CD4-positive, alpha-beta memory T cell (primary cell): ENCODE measurements at regions of chr12 and their contacts with region 1.

Region 1: DNA sequence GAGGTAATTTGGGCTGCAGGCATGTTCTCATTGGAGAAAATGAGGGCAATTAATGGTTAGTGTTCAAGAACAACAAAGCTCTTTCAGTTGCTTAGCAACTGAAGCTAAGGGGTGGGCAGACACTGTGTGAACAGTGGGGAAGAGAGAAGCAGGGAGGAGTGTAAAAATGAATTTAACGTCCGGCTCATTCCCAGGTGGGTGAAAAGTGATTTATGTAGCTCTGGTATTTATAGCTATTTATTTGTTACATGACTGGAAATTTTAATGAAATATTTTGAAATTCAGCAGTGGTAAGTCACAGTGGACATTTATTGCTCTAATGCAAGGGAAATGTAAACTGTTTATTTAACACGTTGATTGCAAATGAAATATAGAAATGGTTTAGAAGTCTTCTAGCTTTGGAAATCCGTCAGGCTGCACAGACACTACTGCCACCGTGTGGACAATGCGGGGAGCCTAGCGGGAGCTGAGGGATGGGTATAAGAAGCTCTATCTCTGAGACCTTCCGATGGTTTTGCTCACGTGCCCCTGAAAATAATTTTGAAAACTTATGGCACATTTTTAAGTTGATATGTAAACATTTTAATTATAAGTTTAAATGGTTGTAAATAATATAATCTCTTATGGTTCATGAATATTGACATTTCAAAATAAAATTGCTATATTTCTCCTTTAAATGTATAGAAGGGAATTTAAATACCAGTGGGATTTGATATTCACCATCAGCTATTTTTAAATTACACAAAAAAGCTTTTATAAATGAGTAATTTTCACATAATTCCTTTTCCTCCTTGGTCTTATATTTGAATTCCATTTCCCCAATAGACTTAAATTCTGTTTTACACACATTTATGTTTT is 54.4 kb downstream of the E2F7 start:
- DNase-seq: peak; percentile 35 to 53 (median 43)
- H3K4me3 ChIP-seq: no peak overlapping the region
- H3K4me3 Mint-ChIP-seq: peak overlapping the region in 1 of 8 donors; percentile 5
- H3K27ac ChIP-seq: no peak overlapping the region
- H3K27ac Mint-ChIP-seq: no peak overlapping the region
- H3K4me1 ChIP-seq: no peaks in the 10 kb centered on the region
- H3K4me1 Mint-ChIP-seq: peaks cover 5 to 7% (median 5%) of the 10 kb centered on the region in 4 donors
- H3K27me3 ChIP-seq: no peaks in the 10 kb centered on the region
- H3K27me3 Mint-ChIP-seq: peaks cover 16 to 17% of the 10 kb centered on the region in 2 donors

Region 2: DNA sequence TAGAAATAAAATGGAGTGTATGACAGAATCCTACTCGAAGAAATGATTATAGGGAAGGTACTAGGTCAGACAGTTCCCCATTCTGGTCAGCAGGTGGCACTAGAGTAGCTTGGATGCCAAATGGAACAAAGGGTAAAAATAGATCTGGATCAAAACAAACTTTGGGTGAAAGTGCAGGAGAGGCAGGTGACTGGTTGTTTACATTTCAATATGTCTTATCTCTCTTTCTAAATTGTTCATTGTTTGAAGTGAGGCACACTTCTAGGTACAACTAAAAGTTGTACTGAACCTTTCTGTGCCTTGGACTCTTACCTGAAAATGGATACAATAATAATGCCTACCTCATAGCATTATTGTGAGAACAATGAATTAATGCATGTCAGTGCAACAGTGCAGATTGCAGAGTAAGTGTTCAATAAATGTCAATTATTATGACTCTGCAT is 389.3 kb before region 1 on chr12:
- CTCF ChIA-PET with region 1: interaction called, 53 read pairs
- POLR2A ChIA-PET with region 1: no interaction called
- intact Hi-C with region 1: no loop called
- DNase-seq: peak; percentile 63 to 71 (median 63)
- H3K4me3 ChIP-seq: no peak overlapping the region
- H3K4me3 Mint-ChIP-seq: no peak overlapping the region
- H3K27ac ChIP-seq: no peak overlapping the region
- H3K27ac Mint-ChIP-seq: no peak overlapping the region
- H3K4me1 ChIP-seq: no peaks in the 10 kb centered on the region
- H3K4me1 Mint-ChIP-seq: peaks cover 0 to 4% (median 3%) of the 10 kb centered on the region in 4 donors
- H3K27me3 ChIP-seq: no peaks in the 10 kb centered on the region
- H3K27me3 Mint-ChIP-seq: no peaks in the 10 kb centered on the region

Region 3: DNA sequence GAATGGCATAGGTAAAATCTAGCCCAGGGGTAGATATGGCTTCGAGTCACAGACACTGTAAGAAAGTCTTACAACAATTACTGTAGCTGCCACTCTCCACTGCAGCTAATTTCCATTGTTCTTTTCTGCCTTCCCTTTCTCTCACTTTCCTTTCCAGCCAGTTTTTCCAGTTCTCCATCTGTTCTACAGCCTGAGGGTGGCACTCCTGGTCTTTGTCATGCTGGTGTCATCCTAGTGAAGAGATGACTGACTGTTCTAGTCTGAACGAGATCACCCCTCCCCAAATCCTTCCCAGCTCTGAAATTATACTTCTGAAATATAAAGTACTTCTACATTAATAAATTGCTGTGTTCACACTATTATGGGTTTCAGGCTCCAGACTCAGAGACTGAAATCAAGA is 57.9 kb before region 1 on chr12:
- CTCF ChIA-PET with region 1: no interaction called
- POLR2A ChIA-PET with region 1: no interaction called
- intact Hi-C with region 1: no loop called
- DNase-seq: no peak
- H3K4me3 ChIP-seq: no peak overlapping the region
- H3K4me3 Mint-ChIP-seq: no peak overlapping the region
- H3K27ac ChIP-seq: no peak overlapping the region
- H3K27ac Mint-ChIP-seq: no peak overlapping the region
- H3K4me1 ChIP-seq: no peaks in the 10 kb centered on the region
- H3K4me1 Mint-ChIP-seq: peaks cover 0 to 4% (median 0%) of the 10 kb centered on the region in 4 donors
- H3K27me3 ChIP-seq: no peaks in the 10 kb centered on the region
- H3K27me3 Mint-ChIP-seq: peaks cover 11 to 20% of the 10 kb centered on the region in 2 donors

Region 4: DNA sequence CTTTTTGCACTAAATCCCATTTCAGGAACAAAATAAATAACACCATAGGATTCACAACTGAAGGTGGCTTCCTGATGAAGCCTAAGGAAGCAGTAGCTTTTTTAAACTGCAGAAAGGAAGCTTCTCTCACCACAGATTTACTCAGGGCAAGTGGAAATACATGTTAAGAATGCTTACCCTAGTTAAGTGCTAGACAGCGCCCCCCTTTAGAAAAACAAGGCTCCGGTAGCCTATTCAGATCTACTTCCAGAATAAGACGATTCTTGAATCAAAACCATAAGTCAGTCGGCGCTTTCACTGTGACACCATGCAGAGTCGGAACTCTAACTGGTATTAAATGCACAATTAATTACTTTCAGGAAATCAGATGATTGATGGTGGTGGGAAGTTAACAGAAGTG is 12.6 kb after region 1 on chr12:
- CTCF ChIA-PET with region 1: interaction called, 89 read pairs
- POLR2A ChIA-PET with region 1: no interaction called
- intact Hi-C with region 1: no loop called
- DNase-seq: no peak
- H3K4me3 ChIP-seq: no peak overlapping the region
- H3K4me3 Mint-ChIP-seq: no peak overlapping the region
- H3K27ac ChIP-seq: no peak overlapping the region
- H3K27ac Mint-ChIP-seq: no peak overlapping the region
- H3K4me1 ChIP-seq: no peaks in the 10 kb centered on the region
- H3K4me1 Mint-ChIP-seq: peaks cover 0 to 1% (median 0%) of the 10 kb centered on the region in 4 donors
- H3K27me3 ChIP-seq: no peaks in the 10 kb centered on the region
- H3K27me3 Mint-ChIP-seq: no peaks in the 10 kb centered on the region

Region 5: DNA sequence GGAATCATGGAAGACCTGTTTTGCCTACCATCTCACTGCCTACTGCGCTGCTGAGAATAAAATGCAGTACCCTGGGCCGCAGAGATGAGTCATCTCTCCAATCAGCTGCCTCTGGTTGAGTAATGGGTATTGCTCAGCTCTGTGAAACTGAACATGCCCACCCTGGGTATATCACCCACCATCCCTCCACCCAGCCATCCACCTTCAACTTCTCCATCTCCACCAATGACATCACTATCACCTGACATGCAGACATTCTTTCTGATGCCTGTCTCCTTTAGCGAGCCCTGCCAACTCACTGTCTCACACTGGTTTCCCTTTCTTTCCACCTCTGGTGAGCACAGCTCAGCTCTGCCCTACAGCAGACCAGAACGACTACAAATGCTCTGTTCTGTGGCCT is 20.8 kb after region 1 on chr12:
- CTCF ChIA-PET with region 1: interaction called, 50 read pairs
- POLR2A ChIA-PET with region 1: no interaction called
- intact Hi-C with region 1: no loop called
- DNase-seq: no peak
- H3K4me3 ChIP-seq: no peak overlapping the region
- H3K4me3 Mint-ChIP-seq: no peak overlapping the region
- H3K27ac ChIP-seq: no peak overlapping the region
- H3K27ac Mint-ChIP-seq: no peak overlapping the region
- H3K4me1 ChIP-seq: no peaks in the 10 kb centered on the region
- H3K4me1 Mint-ChIP-seq: peaks cover 0 to 8% (median 6%) of the 10 kb centered on the region in 4 donors
- H3K27me3 ChIP-seq: no peaks in the 10 kb centered on the region
- H3K27me3 Mint-ChIP-seq: no peaks in the 10 kb centered on the region

Region 6: GRCh38 chr12:77349689-77350370 is 338.9 kb after region 1 on chr12:
- CTCF ChIA-PET with region 1: no interaction called
- POLR2A ChIA-PET with region 1: no interaction called
- intact Hi-C with region 1: no loop called
- DNase-seq: no peak
- H3K4me3 ChIP-seq: no peak overlapping the region
- H3K4me3 Mint-ChIP-seq: no peak overlapping the region
- H3K27ac ChIP-seq: no peak overlapping the region
- H3K27ac Mint-ChIP-seq: no peak overlapping the region
- H3K4me1 ChIP-seq: no peaks in the 10 kb centered on the region
- H3K4me1 Mint-ChIP-seq: no peaks in the 10 kb centered on the region
- H3K27me3 ChIP-seq: no peaks in the 10 kb centered on the region
- H3K27me3 Mint-ChIP-seq: no peaks in the 10 kb centered on the region